PC-9 (cell line): ENCODE measurements at regions of chr15 and their contacts with region 1.

Region 1: DNA sequence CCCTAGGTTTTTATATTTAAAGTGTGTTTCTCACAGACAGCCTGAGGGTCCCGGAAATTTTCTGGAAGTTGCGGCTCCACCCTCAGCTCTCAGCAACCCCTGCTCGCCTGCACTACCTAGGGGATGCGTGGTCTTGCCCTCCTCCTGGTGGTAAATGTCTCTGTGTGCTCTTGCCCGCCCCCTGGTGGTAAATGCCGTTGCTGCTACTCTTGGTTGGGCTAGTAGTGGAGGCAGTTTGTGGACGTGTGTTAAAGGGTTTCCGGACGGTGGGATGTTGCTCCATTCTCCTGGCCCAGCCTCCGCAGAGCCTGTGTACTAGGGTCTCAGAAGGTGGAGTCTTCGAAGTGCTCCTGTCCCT is 27.4 kb downstream of the STOML1 start:
- DNase-seq: peak; percentile 52 to 76
- H3K4me3 ChIP-seq: no peak overlapping the region
- H3K27ac ChIP-seq: no peak overlapping the region
- H3K4me1 ChIP-seq: peaks cover 5% of the 10 kb centered on the region
- H3K27me3 ChIP-seq: no peaks in the 10 kb centered on the region
- CTCF ChIP-seq: peak; percentile 93

Region 2: DNA sequence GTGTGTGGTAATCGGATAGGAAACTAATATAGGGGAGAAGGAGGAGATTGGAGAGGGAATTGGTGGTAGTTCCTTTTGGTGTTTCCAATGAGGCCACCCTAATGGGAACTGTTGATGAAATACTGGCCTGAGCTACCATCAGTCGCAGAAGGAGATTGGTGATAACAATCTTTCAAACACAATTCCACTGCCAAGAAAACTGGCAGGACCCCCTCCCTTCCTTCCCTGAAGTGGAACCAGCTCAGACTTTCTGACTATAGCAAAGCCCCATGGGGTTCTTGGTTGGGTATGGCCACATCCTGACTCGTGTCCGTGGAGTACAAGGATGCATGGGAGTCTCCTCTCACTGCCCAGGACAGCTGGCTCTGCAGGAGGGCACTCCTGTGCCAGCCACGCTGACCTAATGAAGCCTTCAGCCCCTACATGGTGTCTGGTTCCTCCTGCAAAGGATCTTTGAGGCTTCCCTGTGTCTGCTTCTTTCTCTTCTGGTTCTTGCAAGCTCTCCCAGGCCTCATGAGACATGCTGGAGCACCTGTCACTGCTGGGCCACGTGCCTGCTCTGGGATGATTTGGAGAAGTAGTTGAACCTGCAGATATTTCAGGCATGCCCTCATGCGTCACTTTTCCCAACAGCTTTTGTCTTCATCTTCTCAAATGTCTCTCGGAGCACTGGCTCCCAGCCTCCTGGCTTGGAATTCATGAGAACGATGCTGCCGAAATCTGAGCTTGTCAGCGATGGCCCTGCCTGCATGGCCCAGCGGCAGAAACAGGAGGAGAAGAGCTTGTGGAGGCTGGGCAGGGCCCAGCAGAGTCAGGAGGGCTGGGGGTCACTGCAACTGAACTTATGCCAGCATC is 1091.1 kb before region 1 on chr15:
- CTCF ChIA-PET with region 1: interaction called, 10 read pairs
- POLR2A ChIA-PET with region 1: no interaction called
- intact Hi-C with region 1: no loop called
- DNase-seq: no peak
- H3K4me3 ChIP-seq: no peak overlapping the region
- H3K27ac ChIP-seq: no peak overlapping the region
- H3K4me1 ChIP-seq: no peaks in the 10 kb centered on the region
- H3K27me3 ChIP-seq: peaks cover 43% of the 10 kb centered on the region; the same call in 1 of the 2 replicates
- CTCF ChIP-seq: no peak

Region 3: GRCh38 chr15:73683777-73684580 is 280.7 kb before region 1 on chr15 and contains the start of gene CD276:
- CTCF ChIA-PET with region 1: no interaction called
- POLR2A ChIA-PET with region 1: no interaction called
- intact Hi-C with region 1: no loop called
- DNase-seq: peak; percentile 58 to 84
- H3K4me3 ChIP-seq: peak within 1 kb of the TSS; percentile 93
- H3K27ac ChIP-seq: peak within 1 kb of the TSS; percentile 66
- H3K4me1 ChIP-seq: peaks cover 34% of the 10 kb centered on the region
- H3K27me3 ChIP-seq: no peaks in the 10 kb centered on the region
- CTCF ChIP-seq: no peak
- total RNA-seq, gene CD276: 82.6 and 91.1 TPM in 2 replicates

Region 4: GRCh38 chr15:73873889-73874511 is 90.7 kb before region 1 on chr15:
- CTCF ChIA-PET with region 1: no interaction called
- POLR2A ChIA-PET with region 1: no interaction called
- intact Hi-C with region 1: loop called (anchors 10 kb)
- DNase-seq: peak; percentile 17 to 60
- H3K4me3 ChIP-seq: no peak overlapping the region
- H3K27ac ChIP-seq: no peak overlapping the region
- H3K4me1 ChIP-seq: no peaks in the 10 kb centered on the region
- H3K27me3 ChIP-seq: peaks cover 46% of the 10 kb centered on the region
- CTCF ChIP-seq: peak; percentile 86

Region 5: DNA sequence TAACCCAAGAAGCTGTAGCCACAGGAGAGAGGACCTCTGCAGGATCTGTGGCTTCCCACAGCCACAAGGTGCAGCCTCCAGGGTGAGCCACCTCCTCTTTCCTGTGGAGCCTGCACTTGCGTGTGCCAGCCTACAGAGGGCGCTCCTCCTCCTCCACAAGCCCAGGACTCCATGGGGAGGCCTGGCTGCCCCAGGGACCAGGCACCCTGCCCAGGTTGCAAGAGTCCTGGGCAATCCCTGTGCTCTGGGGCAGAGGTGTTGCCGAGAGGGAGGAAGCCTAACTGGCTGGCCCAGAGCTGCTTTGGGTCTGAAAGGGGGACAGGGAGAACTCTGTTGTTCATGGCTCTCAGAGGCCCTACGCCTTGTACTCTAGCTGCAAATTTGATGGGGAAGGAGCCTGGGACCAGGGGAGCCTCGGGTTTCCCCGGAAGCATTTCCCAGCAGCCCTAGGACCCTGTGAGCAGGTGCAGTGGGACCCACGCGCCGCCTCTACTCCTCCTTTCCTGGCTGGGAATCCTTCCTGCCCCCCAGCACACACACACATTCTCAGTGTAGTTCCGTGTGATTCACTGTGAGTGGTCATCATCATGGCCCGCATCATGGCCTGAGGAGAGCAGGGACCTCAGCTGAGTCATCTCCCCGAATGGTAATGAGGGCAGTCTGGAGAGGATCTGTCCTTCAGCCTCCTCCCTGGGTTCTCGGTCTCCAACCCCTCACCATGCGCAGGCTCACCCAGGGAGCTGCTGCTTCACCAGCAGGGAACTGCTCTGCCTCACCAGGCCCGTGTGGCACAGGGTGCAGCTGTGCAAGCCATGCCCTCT is 67.1 kb before region 1 on chr15:
- CTCF ChIA-PET with region 1: interaction called, 14 read pairs
- POLR2A ChIA-PET with region 1: no interaction called
- intact Hi-C with region 1: loop called (anchors 5 kb)
- DNase-seq: peak; percentile 58 to 61
- H3K4me3 ChIP-seq: no peak overlapping the region
- H3K27ac ChIP-seq: peak overlapping the region; percentile 62
- H3K4me1 ChIP-seq: peaks cover 18% of the 10 kb centered on the region
- H3K27me3 ChIP-seq: no peaks in the 10 kb centered on the region
- CTCF ChIP-seq: peak; percentile 98

Region 6: DNA sequence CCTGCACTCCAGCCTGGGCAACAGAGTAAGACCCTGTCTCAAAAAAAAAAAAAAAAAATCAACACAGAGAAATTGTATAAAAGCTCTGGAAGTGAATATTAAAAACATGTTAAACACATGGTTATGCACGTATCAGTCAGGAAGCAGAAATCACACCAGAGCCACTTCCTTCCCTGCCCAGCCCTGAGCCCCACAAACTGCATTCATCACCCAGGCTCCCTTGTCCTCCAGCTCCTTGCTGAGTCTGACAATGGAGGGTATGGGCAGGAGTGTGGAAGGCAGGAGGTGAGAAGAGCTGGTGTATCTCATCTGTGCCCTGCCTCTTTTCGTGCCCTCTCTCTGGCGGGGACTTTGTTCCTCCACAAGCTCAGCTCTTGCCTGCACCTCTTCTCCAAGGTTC is 50.6 kb before region 1 on chr15:
- CTCF ChIA-PET with region 1: no interaction called
- POLR2A ChIA-PET with region 1: no interaction called
- intact Hi-C with region 1: no loop called
- DNase-seq: no peak
- H3K4me3 ChIP-seq: no peak overlapping the region
- H3K27ac ChIP-seq: no peak overlapping the region
- H3K4me1 ChIP-seq: peaks cover 24% of the 10 kb centered on the region
- H3K27me3 ChIP-seq: no peaks in the 10 kb centered on the region
- CTCF ChIP-seq: no peak

Region 7: GRCh38 chr15:73927476-73928240 is 37.1 kb before region 1 on chr15:
- CTCF ChIA-PET with region 1: no interaction called
- POLR2A ChIA-PET with region 1: interaction called, 3 read pairs
- intact Hi-C with region 1: loop called (anchors 5 kb)
- DNase-seq: peak; percentile 49 to 78
- H3K4me3 ChIP-seq: peak overlapping the region; percentile 62
- H3K27ac ChIP-seq: peak overlapping the region; percentile 54
- H3K4me1 ChIP-seq: peaks cover 62% of the 10 kb centered on the region
- H3K27me3 ChIP-seq: no peaks in the 10 kb centered on the region
- CTCF ChIP-seq: peak; percentile 76

Region 8: GRCh38 chr15:73936588-73937290 is 28.0 kb before region 1 on chr15:
- CTCF ChIA-PET with region 1: interaction called, 12 read pairs
- POLR2A ChIA-PET with region 1: no interaction called
- intact Hi-C with region 1: no loop called
- DNase-seq: no peak
- H3K4me3 ChIP-seq: peak overlapping the region; percentile 55
- H3K27ac ChIP-seq: peak overlapping the region; percentile 86
- H3K4me1 ChIP-seq: peaks cover 100% of the 10 kb centered on the region
- H3K27me3 ChIP-seq: no peaks in the 10 kb centered on the region
- CTCF ChIP-seq: no peak